ENCODE measurements at regions of chr7 and their contacts with region 1.

Region 1: GRCh38 chr7:130896898-130897514 is 163.0 kb upstream of the KLF14 start:
- DNase-seq: peak; percentile 87
- ATAC-seq: peak; percentile 56
- H3K4me3 Mint-ChIP-seq: peak overlapping the region; percentile 22
- H3K27ac Mint-ChIP-seq: peak overlapping the region; percentile 88
- H3K4me1 Mint-ChIP-seq: peaks cover 94% of the 10 kb centered on the region
- H3K27me3 Mint-ChIP-seq: no peaks in the 10 kb centered on the region

Region 2: DNA sequence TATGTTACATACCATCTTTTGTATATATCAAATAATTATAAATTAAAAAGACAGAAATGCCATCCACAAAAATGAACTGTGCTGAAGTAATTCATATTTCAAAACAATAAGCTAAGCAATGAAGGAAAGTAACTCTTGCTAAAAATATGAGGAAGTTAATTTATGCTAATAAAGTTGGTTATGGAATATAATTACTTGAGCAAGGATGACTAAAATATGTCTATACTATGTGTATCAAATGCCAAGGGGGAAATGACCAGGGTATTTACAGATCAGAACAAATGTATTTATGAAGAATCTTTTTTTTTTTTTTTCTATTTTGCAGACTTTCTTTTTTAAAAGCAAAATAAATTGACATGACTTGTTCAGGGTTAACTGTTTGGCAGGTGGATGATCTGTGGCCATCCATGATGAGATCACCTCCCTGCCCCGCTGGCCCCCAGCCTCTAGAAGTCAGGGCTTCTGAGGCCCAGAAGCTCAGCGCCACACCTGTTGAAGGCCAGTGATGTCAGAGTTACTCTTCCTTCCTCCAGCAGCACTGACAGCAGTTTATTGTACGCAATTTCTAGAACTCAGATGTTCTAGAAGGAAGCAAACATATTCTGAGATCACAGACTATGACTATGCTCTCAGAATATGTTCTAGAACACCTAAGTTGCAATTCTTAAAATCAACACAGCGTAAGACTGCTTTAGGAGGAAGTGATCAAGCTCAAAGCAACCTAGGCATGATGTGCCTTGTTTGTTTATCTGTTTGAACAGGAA is 33.1 kb after region 1 on chr7:
- CTCF ChIA-PET with region 1: interaction called, 23 read pairs
- POLR2A ChIA-PET with region 1: interaction called, 3 read pairs
- intact Hi-C with region 1: no loop called
- DNase-seq: no peak
- ATAC-seq: peak; percentile 30
- H3K4me3 Mint-ChIP-seq: peak overlapping the region; percentile 9
- H3K27ac Mint-ChIP-seq: peak overlapping the region; percentile 91
- H3K4me1 Mint-ChIP-seq: peaks cover 92% of the 10 kb centered on the region
- H3K27me3 Mint-ChIP-seq: no peaks in the 10 kb centered on the region

Region 3: DNA sequence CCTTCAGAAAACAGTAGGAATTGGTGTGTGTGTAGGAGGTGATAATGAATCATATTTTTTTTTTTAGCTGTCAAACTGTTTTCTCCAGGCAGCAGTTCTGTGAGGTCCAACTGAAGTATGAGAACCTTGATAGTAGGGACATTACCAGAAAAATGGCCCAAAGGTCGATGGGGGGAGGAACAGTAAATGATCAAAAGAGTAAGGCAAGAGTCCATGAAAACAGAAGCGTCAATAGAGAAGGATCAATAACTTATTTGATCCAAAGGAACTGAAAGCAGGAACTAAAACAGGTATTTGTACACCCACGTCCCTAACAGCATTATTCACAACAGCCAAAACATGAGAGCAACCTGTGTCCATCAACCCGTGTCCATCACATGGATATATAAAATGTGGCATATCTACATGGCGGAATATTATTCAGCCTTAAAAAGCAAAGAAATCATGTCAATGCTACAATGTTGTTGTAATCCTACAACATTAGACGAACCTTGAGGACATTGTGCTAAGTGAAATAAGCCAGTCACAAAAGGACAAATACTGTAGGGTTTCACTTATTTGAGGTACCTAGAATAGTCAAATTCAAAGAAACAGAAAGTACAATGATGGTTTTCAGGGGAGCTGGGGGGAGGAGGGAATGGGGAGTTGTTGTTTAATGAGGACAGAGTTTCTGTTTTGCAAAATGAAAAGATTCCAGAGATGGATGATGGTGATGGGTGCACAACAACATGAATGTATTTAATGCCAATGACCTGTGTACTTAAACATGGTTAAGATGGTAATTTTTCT is 51.0 kb after region 1 on chr7:
- CTCF ChIA-PET with region 1: interaction called, 44 read pairs
- POLR2A ChIA-PET with region 1: interaction called, 14 read pairs
- intact Hi-C with region 1: loop called in 1 of 2 experiments (anchors 10 kb)
- DNase-seq: no peak
- ATAC-seq: peak; percentile 12
- H3K4me3 Mint-ChIP-seq: peak overlapping the region; percentile 58
- H3K27ac Mint-ChIP-seq: peak overlapping the region; percentile 85
- H3K4me1 Mint-ChIP-seq: peaks cover 60% of the 10 kb centered on the region
- H3K27me3 Mint-ChIP-seq: no peaks in the 10 kb centered on the region

Region 4: DNA sequence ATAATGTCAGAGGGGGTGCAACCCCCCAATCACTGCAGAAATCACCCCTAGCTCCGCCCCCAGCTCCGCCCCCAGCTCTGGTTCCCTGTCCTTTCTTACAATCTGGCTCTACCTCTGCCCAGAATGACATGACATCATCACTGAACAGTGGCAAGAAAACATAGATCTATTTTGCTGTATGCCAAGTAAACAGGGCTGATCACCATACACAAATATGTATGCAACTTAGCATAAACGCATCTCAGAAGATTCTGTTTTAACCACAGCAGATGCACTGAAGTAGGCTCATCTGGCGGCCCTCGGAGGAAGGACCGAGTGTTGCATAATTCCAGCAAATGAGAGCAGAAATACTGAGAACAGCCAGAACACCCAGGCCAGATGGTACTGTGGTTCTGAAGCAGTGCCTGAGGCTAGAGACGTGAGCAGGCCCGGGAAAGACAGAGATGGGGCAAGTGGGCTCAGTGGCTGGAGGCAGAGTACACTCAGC is 130.3 kb after region 1 on chr7:
- CTCF ChIA-PET with region 1: interaction called, 9 read pairs
- POLR2A ChIA-PET with region 1: interaction called, 7 read pairs
- intact Hi-C with region 1: loop called in 1 of 2 experiments (anchors 1 kb)
- DNase-seq: peak; percentile 70
- ATAC-seq: peak; percentile 27
- H3K4me3 Mint-ChIP-seq: peak overlapping the region; percentile 25
- H3K27ac Mint-ChIP-seq: peak overlapping the region; percentile 85
- H3K4me1 Mint-ChIP-seq: peaks cover 85% of the 10 kb centered on the region
- H3K27me3 Mint-ChIP-seq: no peaks in the 10 kb centered on the region